ENCODE measurements at regions of chr1 and their contacts with region 1.

Region 1: GRCh38 chr1:171313835-171314320 is at the start of gene FMO4:
- DNase-seq: peak; percentile 94
- ATAC-seq: peak; percentile 100
- H3K4me3 ChIP-seq: peak within 1 kb of the TSS; percentile 6 to 58 (median 8)
- H3K4me3 Mint-ChIP-seq: peak within 1 kb of the TSS; percentile 88
- H3K27ac ChIP-seq: peak within 1 kb of the TSS; percentile 51 to 86
- H3K27ac Mint-ChIP-seq: peak within 1 kb of the TSS; percentile 93
- H3K4me1 ChIP-seq: peaks cover 14% of the 10 kb centered on the region in 2 donors
- H3K4me1 Mint-ChIP-seq: peaks cover 19% of the 10 kb centered on the region
- H3K27me3 ChIP-seq: no peaks in the 10 kb centered on the region
- H3K27me3 Mint-ChIP-seq: no peaks in the 10 kb centered on the region
- CTCF ChIP-seq: peak; percentile 89
- total RNA-seq, gene FMO4: 3.0 and 3.5 TPM in 2 replicates

Region 2: DNA sequence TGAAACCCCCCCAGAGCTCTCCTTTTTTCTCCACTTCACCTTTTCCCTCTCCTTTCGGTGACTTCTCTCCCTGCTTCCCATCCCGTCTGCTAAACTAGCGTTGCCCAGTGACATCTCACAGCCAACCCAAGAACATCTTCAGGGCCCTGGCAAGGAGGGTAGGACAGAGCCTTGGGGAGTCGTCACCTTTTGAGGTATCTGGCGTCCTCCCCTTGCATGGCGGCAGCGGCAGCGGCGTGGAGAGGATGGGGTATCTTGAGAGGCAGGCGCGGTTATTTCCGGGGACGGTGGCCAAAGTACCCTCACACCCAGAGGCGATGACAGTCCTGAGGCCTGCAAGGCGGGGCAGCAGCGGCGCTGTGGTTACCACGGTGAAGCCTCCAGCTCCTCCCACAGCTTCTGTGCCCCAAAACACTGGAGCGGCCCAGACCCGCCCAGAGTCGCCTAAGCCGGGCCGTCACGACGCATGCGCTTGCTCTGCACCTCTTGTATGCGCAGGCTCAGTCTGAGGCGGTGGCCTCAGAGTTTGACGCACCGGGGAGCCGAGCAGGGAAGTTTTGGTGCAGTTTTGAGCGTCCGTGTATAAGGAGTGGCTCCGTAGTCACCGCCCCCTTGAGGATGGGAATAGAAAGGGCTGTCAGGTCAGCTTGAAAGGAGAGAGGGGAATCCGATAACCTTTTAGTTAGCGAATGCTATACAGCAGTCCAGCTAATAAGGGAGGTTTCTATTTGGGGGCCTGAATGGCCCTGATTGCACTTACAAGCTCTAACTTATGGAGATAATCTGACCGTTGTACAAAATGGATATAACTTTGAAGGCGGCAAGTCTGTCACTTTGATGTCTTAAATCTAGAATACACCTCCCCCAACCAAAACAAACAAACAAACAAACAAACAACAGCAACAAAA is 1239.4 kb before region 1 on chr1 and contains the start of gene KIFAP3:
- CTCF ChIA-PET with region 1: interaction called, 3 read pairs
- POLR2A ChIA-PET with region 1: no interaction called
- intact Hi-C with region 1: loop called (anchors 2 kb)
- DNase-seq: peak; percentile 98
- ATAC-seq: peak; percentile 93
- H3K4me3 ChIP-seq: peak within 1 kb of the TSS; percentile 43 to 78 (median 66)
- H3K4me3 Mint-ChIP-seq: peak within 1 kb of the TSS; percentile 92
- H3K27ac ChIP-seq: peak within 1 kb of the TSS; percentile 63 to 84
- H3K27ac Mint-ChIP-seq: peak within 1 kb of the TSS; percentile 95
- H3K4me1 ChIP-seq: peaks cover 19 to 20% of the 10 kb centered on the region in 2 donors
- H3K4me1 Mint-ChIP-seq: peaks cover 44% of the 10 kb centered on the region
- H3K27me3 ChIP-seq: no peaks in the 10 kb centered on the region
- H3K27me3 Mint-ChIP-seq: peaks cover 11% of the 10 kb centered on the region
- CTCF ChIP-seq: peak; percentile 52
- total RNA-seq, gene KIFAP3: 14.1 and 14.9 TPM in 2 replicates

Region 3: DNA sequence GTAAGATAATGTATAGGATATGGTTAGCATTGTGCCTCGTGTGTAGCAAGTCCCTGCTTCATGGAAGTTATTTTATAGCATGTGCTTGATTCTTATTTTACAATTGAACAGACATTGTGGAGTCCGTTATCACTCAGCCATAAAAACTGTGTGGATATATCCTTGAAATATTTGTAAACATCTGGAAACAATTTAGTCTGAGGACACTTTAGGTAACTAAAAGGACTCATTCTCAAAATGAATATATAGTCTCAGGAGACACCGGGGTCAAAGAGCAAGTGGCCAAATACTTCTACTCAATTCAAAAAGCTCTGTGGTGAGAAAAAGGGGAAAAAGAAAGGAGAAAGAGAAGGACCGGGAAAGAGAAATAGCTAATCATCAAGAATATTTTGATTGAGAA is 626.3 kb before region 1 on chr1:
- CTCF ChIA-PET with region 1: interaction called, 19 read pairs
- POLR2A ChIA-PET with region 1: no interaction called
- intact Hi-C with region 1: no loop called
- DNase-seq: no peak
- ATAC-seq: no peak
- H3K4me3 ChIP-seq: no peak overlapping the region
- H3K4me3 Mint-ChIP-seq: no peak overlapping the region
- H3K27ac ChIP-seq: no peak overlapping the region
- H3K27ac Mint-ChIP-seq: no peak overlapping the region
- H3K4me1 ChIP-seq: no peaks in the 10 kb centered on the region
- H3K4me1 Mint-ChIP-seq: no peaks in the 10 kb centered on the region
- H3K27me3 ChIP-seq: peaks cover 0 to 9% (median 0%) of the 10 kb centered on the region in 4 experiments
- H3K27me3 Mint-ChIP-seq: peaks cover 30% of the 10 kb centered on the region
- CTCF ChIP-seq: no peak

Region 4: DNA sequence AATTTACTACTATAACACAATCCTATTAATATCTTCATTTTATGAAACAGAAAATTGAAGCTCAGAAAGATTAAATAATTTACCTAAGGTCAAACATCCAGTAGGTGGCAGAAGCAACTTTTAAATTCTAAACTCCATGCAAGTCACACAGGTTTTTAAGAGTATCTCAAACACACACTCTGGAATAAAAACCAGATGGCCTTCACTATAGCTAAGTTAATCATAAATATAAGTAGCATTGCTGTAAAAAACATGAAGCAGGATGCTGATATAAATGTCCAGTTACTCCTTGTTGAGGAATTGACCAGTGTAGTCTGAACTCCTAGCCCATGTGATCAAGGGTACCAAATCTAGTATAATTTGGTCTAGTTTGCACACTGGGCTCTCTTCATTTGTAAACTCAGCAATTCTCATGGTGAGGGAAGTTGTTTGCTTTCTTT is 232.5 kb before region 1 on chr1:
- CTCF ChIA-PET with region 1: interaction called, 10 read pairs
- POLR2A ChIA-PET with region 1: no interaction called
- intact Hi-C with region 1: loop called (anchors 10 kb)
- DNase-seq: no peak
- ATAC-seq: no peak
- H3K4me3 ChIP-seq: no peak overlapping the region
- H3K4me3 Mint-ChIP-seq: no peak overlapping the region
- H3K27ac ChIP-seq: no peak overlapping the region
- H3K27ac Mint-ChIP-seq: no peak overlapping the region
- H3K4me1 ChIP-seq: no peaks in the 10 kb centered on the region
- H3K4me1 Mint-ChIP-seq: no peaks in the 10 kb centered on the region
- H3K27me3 ChIP-seq: no peaks in the 10 kb centered on the region
- H3K27me3 Mint-ChIP-seq: peaks cover 3% of the 10 kb centered on the region
- CTCF ChIP-seq: no peak

Region 5: DNA sequence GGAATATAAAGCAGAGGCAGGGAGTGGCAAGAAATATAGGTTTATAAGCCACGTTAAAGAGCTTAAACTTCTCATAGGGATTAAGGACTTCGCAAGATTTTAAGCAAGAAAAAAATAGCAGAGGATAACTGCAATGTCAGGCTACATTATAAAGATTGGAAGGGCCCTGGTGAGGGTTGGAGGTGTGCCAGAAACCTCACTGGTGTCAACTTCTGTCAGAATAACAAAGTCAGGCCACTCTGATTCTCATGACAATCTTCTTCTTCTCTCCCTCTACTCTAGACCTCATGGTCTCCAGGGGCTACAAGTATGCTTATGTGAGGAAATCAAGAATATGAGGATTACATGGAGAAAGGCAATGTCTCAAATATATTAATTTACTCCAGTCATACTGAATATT is 161.3 kb before region 1 on chr1:
- CTCF ChIA-PET with region 1: no interaction called
- POLR2A ChIA-PET with region 1: no interaction called
- intact Hi-C with region 1: no loop called
- DNase-seq: no peak
- ATAC-seq: no peak
- H3K4me3 ChIP-seq: no peak overlapping the region
- H3K4me3 Mint-ChIP-seq: no peak overlapping the region
- H3K27ac ChIP-seq: no peak overlapping the region
- H3K27ac Mint-ChIP-seq: no peak overlapping the region
- H3K4me1 ChIP-seq: no peaks in the 10 kb centered on the region
- H3K4me1 Mint-ChIP-seq: no peaks in the 10 kb centered on the region
- H3K27me3 ChIP-seq: no peaks in the 10 kb centered on the region
- H3K27me3 Mint-ChIP-seq: peaks cover 7% of the 10 kb centered on the region
- CTCF ChIP-seq: no peak

Region 6: DNA sequence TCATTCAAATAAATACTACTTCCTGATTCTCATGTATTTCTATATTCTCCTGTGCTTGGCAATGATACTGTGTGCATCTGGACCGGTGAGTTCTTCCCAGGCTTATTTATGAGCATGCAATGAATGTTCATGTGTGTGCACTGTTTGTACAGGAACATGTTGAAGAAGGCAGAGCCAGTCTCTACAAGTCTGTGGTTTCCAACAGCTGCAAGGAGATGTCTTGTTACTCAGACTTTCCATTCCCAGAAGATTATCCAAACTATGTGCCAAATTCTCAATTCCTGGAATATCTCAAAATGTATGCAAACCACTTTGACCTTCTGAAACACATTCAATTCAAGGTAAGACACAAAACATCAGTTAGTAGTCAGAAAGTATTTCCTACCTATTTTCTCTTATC is 46.5 kb before region 1 on chr1:
- CTCF ChIA-PET with region 1: no interaction called
- POLR2A ChIA-PET with region 1: no interaction called
- intact Hi-C with region 1: no loop called
- DNase-seq: no peak
- ATAC-seq: no peak
- H3K4me3 ChIP-seq: no peak overlapping the region
- H3K4me3 Mint-ChIP-seq: no peak overlapping the region
- H3K27ac ChIP-seq: no peak overlapping the region
- H3K27ac Mint-ChIP-seq: no peak overlapping the region
- H3K4me1 ChIP-seq: no peaks in the 10 kb centered on the region
- H3K4me1 Mint-ChIP-seq: no peaks in the 10 kb centered on the region
- H3K27me3 ChIP-seq: no peaks in the 10 kb centered on the region
- H3K27me3 Mint-ChIP-seq: peaks cover 16% of the 10 kb centered on the region
- CTCF ChIP-seq: no peak

Region 7: GRCh38 chr1:171366099-171366498 is 52.2 kb after region 1 on chr1:
- CTCF ChIA-PET with region 1: no interaction called
- POLR2A ChIA-PET with region 1: no interaction called
- intact Hi-C with region 1: no loop called
- DNase-seq: no peak
- ATAC-seq: no peak
- H3K4me3 ChIP-seq: no peak overlapping the region
- H3K4me3 Mint-ChIP-seq: no peak overlapping the region
- H3K27ac ChIP-seq: no peak overlapping the region
- H3K27ac Mint-ChIP-seq: no peak overlapping the region
- H3K4me1 ChIP-seq: no peaks in the 10 kb centered on the region
- H3K4me1 Mint-ChIP-seq: no peaks in the 10 kb centered on the region
- H3K27me3 ChIP-seq: peaks cover 0 to 2% (median 0%) of the 10 kb centered on the region in 4 experiments
- H3K27me3 Mint-ChIP-seq: no peaks in the 10 kb centered on the region
- CTCF ChIP-seq: no peak

Region 8: GRCh38 chr1:171501305-171502024 is 187.6 kb after region 1 on chr1:
- CTCF ChIA-PET with region 1: no interaction called
- POLR2A ChIA-PET with region 1: no interaction called
- intact Hi-C with region 1: no loop called
- DNase-seq: no peak
- ATAC-seq: no peak
- H3K4me3 ChIP-seq: no peak overlapping the region
- H3K4me3 Mint-ChIP-seq: no peak overlapping the region
- H3K27ac ChIP-seq: peak overlapping the region in 1 of 2 donors; percentile 24
- H3K27ac Mint-ChIP-seq: no peak overlapping the region
- H3K4me1 ChIP-seq: peaks cover 23 to 32% of the 10 kb centered on the region in 2 donors
- H3K4me1 Mint-ChIP-seq: peaks cover 81% of the 10 kb centered on the region
- H3K27me3 ChIP-seq: no peaks in the 10 kb centered on the region
- H3K27me3 Mint-ChIP-seq: no peaks in the 10 kb centered on the region
- CTCF ChIP-seq: no peak

Region 9: GRCh38 chr1:171781176-171781875 is 467.4 kb after region 1 on chr1 and contains the start of gene METTL13:
- CTCF ChIA-PET with region 1: no interaction called
- POLR2A ChIA-PET with region 1: no interaction called
- intact Hi-C with region 1: loop called (anchors 5 kb)
- DNase-seq: peak; percentile 99
- ATAC-seq: peak; percentile 91
- H3K4me3 ChIP-seq: peak within 1 kb of the TSS; percentile 82 to 100 (median 89)
- H3K4me3 Mint-ChIP-seq: peak within 1 kb of the TSS; percentile 96
- H3K27ac ChIP-seq: peak within 1 kb of the TSS; percentile 71 to 81
- H3K27ac Mint-ChIP-seq: peak within 1 kb of the TSS; percentile 94
- H3K4me1 ChIP-seq: peaks cover 26 to 32% of the 10 kb centered on the region in 2 donors
- H3K4me1 Mint-ChIP-seq: peaks cover 44% of the 10 kb centered on the region
- H3K27me3 ChIP-seq: no peaks in the 10 kb centered on the region
- H3K27me3 Mint-ChIP-seq: peaks cover 8% of the 10 kb centered on the region
- CTCF ChIP-seq: no peak
- total RNA-seq, gene METTL13: 33.0 and 35.4 TPM in 2 replicates